ENCODE measurements at regions of chr10 and their contacts with region 1.

Region 1: GRCh38 chr10:37976091-37976879 is at the start of gene ZNF25:
- DNase-seq: peak; percentile 93 to 96
- H3K4me3 ChIP-seq: peak within 1 kb of the TSS; percentile 67
- H3K27ac ChIP-seq: 0 out of 2 replicates have a peak within 1 kb of the TSS, but pooled peaks have one; percentile 31
- H3K4me1 ChIP-seq: no peaks in the 10 kb centered on the region; the same call in 1 of the 2 replicates
- H3K27me3 ChIP-seq: no peaks in the 10 kb centered on the region
- CTCF ChIP-seq: peak; percentile 80
- total RNA-seq, gene ZNF25: 2.6 and 2.7 TPM in 2 replicates

Region 2: DNA sequence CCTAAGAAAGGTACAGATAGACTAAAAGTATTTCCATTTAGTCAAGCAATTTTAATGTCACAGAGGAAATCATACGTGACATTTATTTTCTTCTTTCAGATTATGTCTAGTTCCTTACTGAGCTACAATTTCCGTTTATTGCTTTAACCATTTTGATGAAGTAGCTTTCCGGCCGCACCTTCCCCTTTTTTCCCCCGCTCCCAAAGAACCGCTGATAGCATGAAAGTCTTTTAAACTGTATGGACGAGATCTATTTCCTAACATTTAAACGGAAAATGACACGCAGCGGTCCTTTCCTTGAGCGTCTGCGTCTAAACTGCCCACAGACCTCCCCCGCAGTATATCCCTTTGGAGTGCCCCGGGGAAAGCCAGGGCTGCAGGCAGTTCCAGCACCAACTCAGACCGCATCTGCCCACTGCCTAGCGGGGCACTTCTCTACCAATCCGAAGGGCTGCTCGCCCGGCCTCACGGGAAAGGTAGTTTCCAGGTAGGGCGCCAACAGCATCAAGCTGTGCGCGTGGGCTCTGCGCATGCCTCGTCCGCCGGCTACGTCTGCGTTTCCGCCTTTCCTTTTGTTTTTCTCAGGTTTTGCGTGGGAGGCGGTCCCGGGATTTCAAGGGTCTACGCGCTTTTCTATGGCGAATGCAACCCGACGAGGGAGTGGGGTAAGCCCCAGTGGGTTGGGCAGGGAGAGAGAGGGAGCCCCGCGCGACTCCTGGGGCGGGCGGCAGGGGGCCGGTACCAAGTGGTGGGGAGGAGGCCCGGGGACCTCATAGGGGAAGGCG is 34.0 kb after region 1 on chr10 and contains the start of gene ZNF33A:
- CTCF ChIA-PET with region 1: no interaction called
- POLR2A ChIA-PET with region 1: interaction called, 11 read pairs
- intact Hi-C with region 1: loop called (anchors 1 kb)
- DNase-seq: peak; percentile 75 to 87
- H3K4me3 ChIP-seq: peak within 1 kb of the TSS; percentile 86
- H3K27ac ChIP-seq: peak within 1 kb of the TSS; percentile 93
- H3K4me1 ChIP-seq: peaks cover 5% of the 10 kb centered on the region
- H3K27me3 ChIP-seq: no peaks in the 10 kb centered on the region
- CTCF ChIP-seq: no peak
- total RNA-seq, gene ZNF33A: 19.5 and 27.5 TPM in 2 replicates

Region 3: DNA sequence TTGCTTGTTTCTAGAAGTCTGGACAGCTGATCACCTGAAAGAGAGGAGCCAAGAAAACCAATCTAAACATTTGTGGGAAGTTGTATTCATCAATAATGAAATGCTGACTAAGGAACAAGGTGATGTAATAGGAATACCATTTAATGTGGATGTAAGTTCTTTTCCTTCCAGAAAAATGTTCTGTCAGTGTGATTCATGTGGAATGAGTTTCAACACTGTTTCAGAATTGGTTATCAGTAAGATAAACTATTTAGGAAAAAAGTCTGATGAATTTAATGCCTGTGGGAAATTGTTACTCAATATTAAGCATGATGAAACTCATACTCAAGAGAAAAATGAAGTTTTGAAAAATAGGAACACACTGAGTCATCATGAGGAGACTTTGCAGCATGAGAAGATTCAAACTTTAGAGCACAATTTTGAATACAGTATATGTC is 78.1 kb after region 1 on chr10:
- CTCF ChIA-PET with region 1: no interaction called
- POLR2A ChIA-PET with region 1: no interaction called
- intact Hi-C with region 1: no loop called
- DNase-seq: no peak
- H3K4me3 ChIP-seq: no peak overlapping the region
- H3K27ac ChIP-seq: no peak overlapping the region
- H3K4me1 ChIP-seq: no peaks in the 10 kb centered on the region
- H3K27me3 ChIP-seq: no peaks in the 10 kb centered on the region
- CTCF ChIP-seq: no peak

Region 4: DNA sequence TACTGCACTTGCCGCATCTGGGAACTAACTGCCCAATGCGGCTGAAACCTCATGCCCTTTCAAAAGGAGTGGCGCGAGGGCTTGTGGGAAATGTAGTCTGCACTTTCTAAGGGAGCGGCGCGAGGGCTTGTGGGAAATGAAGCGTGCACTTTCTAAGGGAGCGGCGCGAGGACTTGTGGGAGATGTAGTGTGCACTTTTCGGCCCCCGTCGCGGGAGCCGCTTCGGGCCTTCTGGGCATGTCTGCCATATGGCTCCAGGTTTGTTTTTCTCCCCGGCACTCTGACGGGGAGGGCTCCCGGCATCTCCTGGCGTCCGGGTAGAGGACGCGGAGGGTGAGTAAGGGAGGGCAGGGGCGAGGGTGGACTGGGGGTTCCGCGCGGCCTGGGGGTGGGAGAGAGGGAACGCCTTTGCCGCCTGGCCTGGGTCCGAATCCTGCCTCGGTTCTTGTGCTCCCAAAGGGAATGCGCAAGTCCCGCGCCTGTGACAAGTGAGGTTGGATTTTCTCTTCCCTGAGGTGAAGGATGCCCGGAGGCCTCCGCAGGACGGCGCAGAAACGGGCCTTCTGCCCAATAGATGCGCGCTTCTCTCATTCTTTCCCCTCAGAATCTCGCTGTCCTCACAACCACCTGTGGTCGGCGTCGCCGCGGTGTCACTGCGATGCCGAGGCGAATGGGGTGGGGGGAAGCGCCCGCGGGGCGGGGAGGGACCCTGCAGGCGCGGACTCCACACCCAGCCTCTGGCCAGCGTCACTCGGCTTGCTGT is 118.1 kb after region 1 on chr10 and contains the start of gene ZNF37A:
- CTCF ChIA-PET with region 1: interaction called, 11 read pairs
- POLR2A ChIA-PET with region 1: interaction called, 38 read pairs
- intact Hi-C with region 1: loop called (anchors 1 kb)
- DNase-seq: peak; percentile 80 to 82
- H3K4me3 ChIP-seq: peak within 1 kb of the TSS; percentile 80
- H3K27ac ChIP-seq: no peak within 1 kb of the TSS
- H3K4me1 ChIP-seq: peaks cover 4% of the 10 kb centered on the region; the same call in 1 of the 2 replicates
- H3K27me3 ChIP-seq: no peaks in the 10 kb centered on the region
- CTCF ChIP-seq: no peak
- total RNA-seq, gene ZNF37A: 4.8 and 5.8 TPM in 2 replicates